Motor neuron (in vitro differentiated cells): ENCODE measurements at regions of chr14 and their contacts with region 1.

Region 1: GRCh38 chr14:96275177-96276112 is 19.4 kb downstream of the BDKRB1 start:
- ATAC-seq: peak; percentile 58 to 93 (median 70)
- H3K4me3 ChIP-seq: no peak overlapping the region
- H3K27ac ChIP-seq: no peak overlapping the region
- H3K4me1 ChIP-seq: peaks cover 10 to 13% of the 10 kb centered on the region in 2 donors

Region 2: DNA sequence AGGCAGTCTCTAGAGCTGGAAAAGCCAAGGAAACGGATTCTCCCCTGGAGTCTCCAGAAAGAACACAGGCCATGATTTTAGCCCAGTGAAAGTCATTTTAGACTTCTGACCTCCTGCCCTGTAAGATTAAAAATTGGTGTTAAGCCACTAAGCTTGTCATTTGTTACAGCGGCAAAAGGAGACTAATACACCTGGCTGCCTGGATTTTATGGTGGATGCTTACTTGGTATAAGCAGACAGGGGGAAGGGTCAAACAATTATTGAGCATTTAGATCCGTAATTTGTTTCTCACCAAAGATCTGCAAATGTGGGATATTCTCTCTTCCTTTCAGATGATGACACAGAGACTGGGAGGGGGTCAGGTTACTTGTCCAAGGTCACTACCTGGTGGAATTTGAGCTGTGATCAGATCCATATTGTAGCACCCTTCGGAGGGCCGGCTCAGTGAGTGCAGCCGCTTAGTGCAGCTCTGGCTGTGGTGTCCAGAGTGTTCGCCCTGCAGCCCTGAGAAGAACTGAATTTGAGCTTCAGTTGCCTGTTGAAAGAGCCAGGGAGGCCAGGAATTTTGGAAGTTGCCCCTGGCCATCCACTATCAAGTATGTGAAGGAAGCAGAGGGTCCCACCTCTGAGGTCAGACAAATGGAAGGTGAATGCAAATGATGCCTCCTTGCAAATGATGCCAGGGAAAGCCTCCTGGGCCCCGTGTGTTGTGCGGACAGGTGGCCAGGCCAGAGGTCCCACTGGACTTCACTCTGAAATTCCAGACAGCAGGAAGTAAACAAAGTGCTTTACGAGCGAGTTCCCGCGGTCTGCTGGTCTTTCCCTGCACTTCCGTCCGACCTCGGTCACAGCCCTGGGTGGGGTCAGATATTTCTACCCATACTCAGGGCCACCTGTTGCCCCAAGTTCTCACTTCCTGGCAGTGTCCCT is 725.5 kb before region 1 on chr14:
- in situ Hi-C with region 1: loop called in 3 of 9 experiments (anchors 10 to 25 kb)
- ATAC-seq: no peak
- H3K4me3 ChIP-seq: no peak overlapping the region
- H3K27ac ChIP-seq: no peak overlapping the region
- H3K4me1 ChIP-seq: no peaks in the 10 kb centered on the region

Region 3: DNA sequence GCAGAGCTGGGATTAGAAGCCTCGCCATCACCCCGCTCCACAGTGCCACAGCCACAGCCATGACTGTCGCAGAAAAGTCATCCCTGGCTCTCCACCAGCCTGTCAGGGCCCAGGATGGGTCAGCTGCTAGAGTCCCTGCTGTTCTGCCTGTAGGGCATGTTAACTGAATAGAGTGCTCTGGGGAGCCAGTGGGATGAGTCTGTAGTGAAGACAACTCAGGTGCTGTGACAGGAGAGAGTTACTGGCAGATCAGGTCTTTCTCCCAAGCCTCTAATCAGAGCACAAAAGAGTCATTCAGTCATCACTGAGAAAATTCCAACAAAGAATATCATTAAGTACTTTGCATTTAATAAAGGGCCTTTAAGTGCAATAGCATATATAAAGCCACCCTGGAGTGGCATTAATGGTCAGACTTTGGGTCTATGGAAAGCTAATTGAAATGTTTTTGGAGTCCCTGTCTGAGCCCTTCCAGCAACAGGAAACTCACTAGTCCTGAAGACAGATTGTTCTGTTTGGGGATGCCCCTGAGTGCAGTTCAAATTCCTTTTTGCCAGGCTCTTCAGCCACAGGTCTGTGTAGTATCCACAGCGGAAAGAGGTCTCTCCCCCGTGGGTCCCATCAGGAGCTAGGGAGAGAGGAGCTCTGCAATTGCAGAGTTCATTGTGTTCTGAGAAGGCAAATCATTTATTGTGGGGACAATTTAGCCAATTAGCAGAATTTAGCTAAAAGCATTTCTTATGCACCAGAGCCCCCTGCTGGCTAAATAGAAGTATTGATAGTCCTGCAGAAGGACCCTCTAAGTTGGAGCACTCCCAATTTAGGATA is 281.5 kb before region 1 on chr14:
- in situ Hi-C with region 1: loop called in 1 of 9 experiments (anchors 10 kb)
- ATAC-seq: peak; percentile 31 to 70 (median 54)
- H3K4me3 ChIP-seq: no peak overlapping the region
- H3K27ac ChIP-seq: no peak overlapping the region
- H3K4me1 ChIP-seq: peaks cover 4 to 6% of the 10 kb centered on the region in 2 donors

Region 4: DNA sequence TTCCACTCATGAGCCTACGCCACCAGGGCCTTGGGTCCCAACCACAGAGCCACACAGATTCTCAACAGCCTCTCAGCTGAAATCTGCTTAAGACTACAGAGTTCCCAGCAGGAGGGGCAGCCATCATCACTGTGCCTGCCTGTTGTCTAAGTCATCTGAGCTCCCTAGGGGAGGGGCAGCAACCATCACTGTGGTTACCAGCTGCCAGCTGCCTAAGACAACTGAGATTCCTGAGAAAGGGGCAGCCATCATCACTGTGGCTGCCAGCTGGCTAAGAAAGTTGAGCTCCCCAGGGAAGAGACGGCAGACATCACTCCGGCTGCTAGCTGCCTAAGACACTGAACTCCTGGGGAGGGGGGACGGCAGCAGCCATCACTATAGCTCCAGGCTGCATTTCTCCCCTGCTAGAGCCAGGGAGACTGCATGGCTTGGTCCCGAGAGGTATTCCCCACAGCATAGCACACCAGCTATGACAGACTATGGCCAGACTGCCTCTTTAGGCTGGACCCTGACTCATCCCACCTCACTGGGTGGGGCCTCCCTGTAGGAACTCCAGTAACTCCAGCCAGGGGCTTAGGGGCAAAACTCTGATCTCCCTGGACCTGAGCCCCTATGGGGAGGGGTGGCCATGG is 273.5 kb before region 1 on chr14:
- in situ Hi-C with region 1: loop called in 7 of 9 experiments (anchors 10 to 25 kb)
- ATAC-seq: peak; percentile 43 to 97 (median 88)
- H3K4me3 ChIP-seq: no peak overlapping the region
- H3K27ac ChIP-seq: no peak overlapping the region
- H3K4me1 ChIP-seq: peaks cover 3 to 9% of the 10 kb centered on the region in 2 donors

Region 5: DNA sequence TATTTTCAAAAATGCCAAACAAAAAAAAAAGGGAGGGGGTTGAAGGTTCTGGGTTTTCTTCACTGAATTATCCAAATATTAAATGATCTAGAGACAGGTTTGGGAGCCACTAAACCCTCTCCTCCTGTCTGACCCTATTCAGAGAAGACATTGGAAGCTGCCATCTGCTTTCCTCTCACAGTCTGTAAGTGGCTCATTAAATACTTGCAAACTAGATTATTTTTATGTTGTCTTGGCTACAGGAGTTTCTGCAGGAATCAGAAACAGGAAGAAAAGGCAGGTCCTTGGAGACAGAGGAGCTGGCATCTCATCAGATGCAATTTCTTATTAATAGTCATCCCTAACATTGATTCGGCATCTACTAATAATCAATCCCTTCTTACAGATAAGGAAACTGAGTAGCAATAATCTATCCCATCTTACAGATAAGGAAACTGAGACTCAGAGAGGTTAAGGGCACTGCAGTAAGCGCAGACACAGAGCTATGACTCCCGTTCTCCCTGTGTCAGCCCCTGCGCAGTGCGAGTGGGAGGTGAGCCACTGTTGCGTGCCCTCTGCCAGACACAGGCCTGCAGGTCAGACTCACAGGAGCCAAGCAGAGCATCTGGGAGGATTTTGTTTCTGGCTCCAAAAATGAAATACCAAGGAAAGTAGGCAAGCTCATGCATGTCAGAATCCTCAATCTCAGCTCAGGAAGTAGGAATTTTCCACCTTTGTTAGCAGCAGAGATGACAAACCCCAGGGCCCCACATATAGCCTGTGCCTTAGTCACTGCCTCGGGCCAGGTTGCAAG is 59.8 kb before region 1 on chr14:
- in situ Hi-C with region 1: no loop called
- ATAC-seq: no peak
- H3K4me3 ChIP-seq: no peak overlapping the region
- H3K27ac ChIP-seq: no peak overlapping the region
- H3K4me1 ChIP-seq: no peaks in the 10 kb centered on the region